Motor neuron (in vitro differentiated cells): ENCODE measurements at regions of chr5 and their contacts with region 1.

Region 1: GRCh38 chr5:172106511-172107356 is 81.3 kb downstream of the STK10 start:
- ATAC-seq: peak in 6 of 8 experiments; percentile 16 to 47 (median 26)
- H3K4me3 ChIP-seq: peak overlapping the region in 2 of 5 donors; percentile 13 to 14
- H3K27ac ChIP-seq: no peak overlapping the region
- H3K4me1 ChIP-seq: peaks cover 25 to 36% of the 10 kb centered on the region in 2 donors

Region 2: DNA sequence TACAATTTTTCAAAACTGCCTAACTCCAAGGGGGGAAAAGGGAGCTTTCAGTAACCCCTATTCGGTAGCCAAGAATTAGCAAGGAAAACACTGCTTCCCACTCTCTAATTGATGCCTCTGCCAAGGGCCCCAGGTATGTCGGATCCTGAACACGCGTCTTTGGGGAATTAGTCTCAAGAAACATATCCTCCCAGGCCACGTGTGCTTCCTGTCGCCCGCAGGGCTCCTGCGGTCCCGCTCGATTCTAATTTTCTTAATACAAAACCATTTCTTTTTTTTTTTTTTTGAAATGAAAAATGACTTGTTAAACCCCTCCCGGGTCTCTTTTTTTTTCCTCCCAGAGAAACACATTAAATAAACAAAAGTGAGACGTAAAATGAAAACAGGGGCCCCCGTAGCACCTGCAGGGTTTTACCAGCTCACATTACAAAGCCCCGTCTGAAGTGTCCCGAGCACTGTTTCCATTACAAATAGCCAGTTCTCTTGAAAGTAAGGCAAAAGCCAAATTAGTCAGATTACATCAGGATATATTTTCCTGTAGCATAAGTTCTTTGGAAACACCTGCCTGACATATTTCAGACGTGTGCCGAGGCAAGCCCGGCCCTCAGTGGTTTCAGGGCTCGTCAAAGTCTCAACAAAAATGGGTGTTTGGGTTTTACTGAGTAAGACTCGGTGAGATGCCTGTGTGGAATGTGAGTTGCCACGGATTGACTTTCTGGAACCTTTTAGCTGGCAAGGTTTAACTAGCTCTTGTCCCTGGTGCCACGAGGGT is 299.6 kb before region 1 on chr5:
- in situ Hi-C with region 1: no loop called
- ATAC-seq: no peak
- H3K4me3 ChIP-seq: no peak overlapping the region
- H3K27ac ChIP-seq: no peak overlapping the region
- H3K4me1 ChIP-seq: no peaks in the 10 kb centered on the region

Region 3: GRCh38 chr5:172188033-172188892 is 81.5 kb after region 1 on chr5 and contains the start of gene STK10:
- in situ Hi-C with region 1: loop called in 1 of 9 experiments (anchors 10 kb)
- ATAC-seq: peak; percentile 68 to 93 (median 90)
- H3K4me3 ChIP-seq: peak within 1 kb of the TSS; percentile 57 to 99 (median 65)
- H3K27ac ChIP-seq: peak within 1 kb of the TSS; percentile 3 to 60
- H3K4me1 ChIP-seq: peaks cover 6 to 10% of the 10 kb centered on the region in 2 donors
- total RNA-seq, gene STK10: 3.6 to 24.6 (median 8.1) TPM

Region 4: GRCh38 chr5:172283020-172283861 is 176.5 kb after region 1 on chr5 and contains the start of gene UBTD2:
- in situ Hi-C with region 1: loop called in 3 of 9 experiments (anchors 25 kb)
- ATAC-seq: peak; percentile 16 to 85 (median 81)
- H3K4me3 ChIP-seq: peak within 1 kb of the TSS; percentile 58 to 96 (median 92)
- H3K27ac ChIP-seq: peak within 1 kb of the TSS; percentile 92 to 96
- H3K4me1 ChIP-seq: peaks cover 19 to 21% of the 10 kb centered on the region in 2 donors
- total RNA-seq, gene UBTD2: 11.3 to 58.2 (median 28.3) TPM